ENCODE measurements at regions of chr9 and their contacts with region 1.

Region 1: GRCh38 chr9:133133681-133134418 is 12.8 kb upstream of the RALGDS start:
- DNase-seq: peak; percentile 87
- ATAC-seq: peak; percentile 82
- H3K4me3 ChIP-seq: no peak overlapping the region
- H3K4me3 Mint-ChIP-seq: peak overlapping the region; percentile 80
- H3K27ac ChIP-seq: peak overlapping the region; percentile 92 to 95
- H3K27ac Mint-ChIP-seq: peak overlapping the region; percentile 100
- H3K4me1 ChIP-seq: peaks cover 28 to 55% of the 10 kb centered on the region in 2 donors
- H3K4me1 Mint-ChIP-seq: peaks cover 55% of the 10 kb centered on the region
- H3K27me3 ChIP-seq: no peaks in the 10 kb centered on the region
- H3K27me3 Mint-ChIP-seq: no peaks in the 10 kb centered on the region
- CTCF ChIP-seq: no peak

Region 2: GRCh38 chr9:131562032-131562959 is 1571.6 kb before region 1 on chr9:
- CTCF ChIA-PET with region 1: no interaction called
- POLR2A ChIA-PET with region 1: no interaction called
- intact Hi-C with region 1: no loop called
- DNase-seq: no peak
- ATAC-seq: no peak
- H3K4me3 ChIP-seq: no peak overlapping the region
- H3K4me3 Mint-ChIP-seq: no peak overlapping the region
- H3K27ac ChIP-seq: no peak overlapping the region
- H3K27ac Mint-ChIP-seq: no peak overlapping the region
- H3K4me1 ChIP-seq: no peaks in the 10 kb centered on the region
- H3K4me1 Mint-ChIP-seq: no peaks in the 10 kb centered on the region
- H3K27me3 ChIP-seq: no peaks in the 10 kb centered on the region
- H3K27me3 Mint-ChIP-seq: no peaks in the 10 kb centered on the region
- CTCF ChIP-seq: no peak

Region 3: DNA sequence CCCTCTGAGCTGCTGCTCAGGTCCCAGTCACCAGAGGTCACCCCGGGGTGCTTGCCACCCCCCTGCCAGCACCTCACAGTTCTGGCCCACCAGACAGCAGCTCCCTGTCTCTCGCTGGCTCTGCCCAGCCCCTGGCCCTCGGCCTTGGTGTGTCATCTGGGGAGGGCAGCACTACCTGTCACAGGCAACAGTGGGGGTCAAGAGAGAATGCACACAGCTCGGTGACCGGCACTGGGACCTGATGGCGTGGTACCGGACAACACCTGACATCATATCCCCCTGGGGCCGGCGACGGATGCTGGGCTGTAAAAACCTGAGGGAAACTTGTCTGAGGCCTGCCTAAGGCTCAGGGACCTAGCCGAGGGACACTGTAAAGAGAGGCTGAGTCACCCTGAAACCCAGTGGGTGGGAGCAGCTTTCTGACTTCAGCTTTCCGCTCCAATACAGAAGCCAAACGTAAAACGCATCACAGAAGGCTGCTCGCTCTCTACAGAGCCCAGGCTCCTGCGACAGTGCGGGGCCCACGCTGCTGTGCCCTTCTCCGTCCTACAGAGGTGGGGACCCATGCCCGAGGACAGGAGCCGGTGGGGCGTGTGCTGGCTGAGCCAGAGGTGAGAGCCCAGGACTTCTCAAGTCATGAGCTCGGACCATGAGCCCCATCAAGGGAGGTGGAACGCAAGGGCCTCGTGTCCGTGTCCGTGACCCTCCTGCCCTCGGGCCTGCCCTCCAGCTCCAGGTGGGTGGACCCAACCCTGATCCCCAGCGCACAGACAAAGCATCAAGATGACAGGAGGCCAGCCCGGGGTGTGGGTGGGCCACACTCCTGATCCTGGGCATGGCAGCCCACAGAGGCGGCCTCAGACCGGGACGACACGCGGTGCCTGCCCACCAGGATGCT is 18.2 kb before region 1 on chr9:
- CTCF ChIA-PET with region 1: interaction called, 9 read pairs
- POLR2A ChIA-PET with region 1: interaction called, 13 read pairs
- intact Hi-C with region 1: no loop called
- DNase-seq: peak; percentile 66
- ATAC-seq: peak; percentile 56
- H3K4me3 ChIP-seq: no peak overlapping the region
- H3K4me3 Mint-ChIP-seq: peak overlapping the region; percentile 67
- H3K27ac ChIP-seq: peak overlapping the region in 1 of 2 donors; percentile 57
- H3K27ac Mint-ChIP-seq: peak overlapping the region; percentile 85
- H3K4me1 ChIP-seq: peaks cover 55 to 68% of the 10 kb centered on the region in 2 donors
- H3K4me1 Mint-ChIP-seq: peaks cover 68% of the 10 kb centered on the region
- H3K27me3 ChIP-seq: no peaks in the 10 kb centered on the region
- H3K27me3 Mint-ChIP-seq: no peaks in the 10 kb centered on the region
- CTCF ChIP-seq: no peak

Region 4: GRCh38 chr9:133121198-133121939 is 12.5 kb before region 1 on chr9 and contains the start of gene RALGDS:
- CTCF ChIA-PET with region 1: interaction called, 3 read pairs
- POLR2A ChIA-PET with region 1: interaction called, 12 read pairs
- intact Hi-C with region 1: loop called (anchors 1 kb)
- DNase-seq: peak; percentile 95
- ATAC-seq: peak; percentile 84
- H3K4me3 ChIP-seq: peak within 1 kb of the TSS; percentile 4 to 75 (median 56)
- H3K4me3 Mint-ChIP-seq: peak within 1 kb of the TSS; percentile 89
- H3K27ac ChIP-seq: peak within 1 kb of the TSS; percentile 97 to 99
- H3K27ac Mint-ChIP-seq: peak within 1 kb of the TSS; percentile 99
- H3K4me1 ChIP-seq: peaks cover 27 to 45% of the 10 kb centered on the region in 2 donors
- H3K4me1 Mint-ChIP-seq: peaks cover 62% of the 10 kb centered on the region
- H3K27me3 ChIP-seq: no peaks in the 10 kb centered on the region
- H3K27me3 Mint-ChIP-seq: no peaks in the 10 kb centered on the region
- CTCF ChIP-seq: no peak
- total RNA-seq, gene RALGDS: 55.7 and 62.4 TPM in 2 replicates

Measured in B cell (primary cell).